B cell (primary cell): ENCODE measurements at regions of chr5 and their contacts with region 1.

Region 1: GRCh38 chr5:59810041-59810440 is 83.5 kb downstream of the PDE4D start:
- DNase-seq: peak; percentile 80
- ATAC-seq: peak; percentile 66
- H3K4me3 ChIP-seq: no peak overlapping the region
- H3K4me3 Mint-ChIP-seq: peak overlapping the region; percentile 51
- H3K27ac ChIP-seq: no peak overlapping the region
- H3K27ac Mint-ChIP-seq: no peak overlapping the region
- H3K4me1 ChIP-seq: peaks cover 0 to 4% of the 10 kb centered on the region in 2 donors
- H3K4me1 Mint-ChIP-seq: peaks cover 16% of the 10 kb centered on the region
- H3K27me3 ChIP-seq: no peaks in the 10 kb centered on the region
- H3K27me3 Mint-ChIP-seq: peaks cover 14% of the 10 kb centered on the region
- CTCF ChIP-seq: peak; percentile 97

Region 2: DNA sequence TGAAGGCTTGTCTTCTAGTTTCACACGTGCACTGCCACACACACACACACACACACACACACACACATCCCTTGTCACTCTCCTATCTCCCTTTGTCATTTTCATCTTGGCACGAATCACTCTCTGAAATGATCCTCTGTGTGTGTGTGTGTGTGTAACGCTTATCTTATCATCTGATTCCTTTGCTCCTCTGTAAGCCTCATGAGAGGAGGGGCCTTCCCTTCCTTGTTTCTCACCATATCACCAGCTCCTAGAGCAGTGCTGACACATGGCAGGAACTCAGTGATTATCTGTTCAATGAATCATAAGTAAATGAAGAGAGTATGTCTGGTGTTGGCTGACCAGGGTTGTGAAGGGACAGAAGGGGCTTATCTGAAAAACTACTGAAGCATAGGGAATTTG is 30.2 kb after region 1 on chr5:
- CTCF ChIA-PET with region 1: no interaction called
- POLR2A ChIA-PET with region 1: no interaction called
- intact Hi-C with region 1: no loop called
- DNase-seq: no peak
- ATAC-seq: no peak
- H3K4me3 ChIP-seq: no peak overlapping the region
- H3K4me3 Mint-ChIP-seq: no peak overlapping the region
- H3K27ac ChIP-seq: no peak overlapping the region
- H3K27ac Mint-ChIP-seq: no peak overlapping the region
- H3K4me1 ChIP-seq: no peaks in the 10 kb centered on the region
- H3K4me1 Mint-ChIP-seq: no peaks in the 10 kb centered on the region
- H3K27me3 ChIP-seq: no peaks in the 10 kb centered on the region
- H3K27me3 Mint-ChIP-seq: peaks cover 10% of the 10 kb centered on the region
- CTCF ChIP-seq: no peak

Region 3: GRCh38 chr5:60287174-60287771 is 477.2 kb after region 1 on chr5:
- CTCF ChIA-PET with region 1: interaction called, 4 read pairs
- POLR2A ChIA-PET with region 1: no interaction called
- intact Hi-C with region 1: loop called (anchors 2 kb)
- DNase-seq: peak; percentile 56
- ATAC-seq: no peak
- H3K4me3 ChIP-seq: no peak overlapping the region
- H3K4me3 Mint-ChIP-seq: no peak overlapping the region
- H3K27ac ChIP-seq: no peak overlapping the region
- H3K27ac Mint-ChIP-seq: no peak overlapping the region
- H3K4me1 ChIP-seq: no peaks in the 10 kb centered on the region
- H3K4me1 Mint-ChIP-seq: no peaks in the 10 kb centered on the region
- H3K27me3 ChIP-seq: no peaks in the 10 kb centered on the region
- H3K27me3 Mint-ChIP-seq: peaks cover 11% of the 10 kb centered on the region
- CTCF ChIP-seq: peak; percentile 67

Region 4: DNA sequence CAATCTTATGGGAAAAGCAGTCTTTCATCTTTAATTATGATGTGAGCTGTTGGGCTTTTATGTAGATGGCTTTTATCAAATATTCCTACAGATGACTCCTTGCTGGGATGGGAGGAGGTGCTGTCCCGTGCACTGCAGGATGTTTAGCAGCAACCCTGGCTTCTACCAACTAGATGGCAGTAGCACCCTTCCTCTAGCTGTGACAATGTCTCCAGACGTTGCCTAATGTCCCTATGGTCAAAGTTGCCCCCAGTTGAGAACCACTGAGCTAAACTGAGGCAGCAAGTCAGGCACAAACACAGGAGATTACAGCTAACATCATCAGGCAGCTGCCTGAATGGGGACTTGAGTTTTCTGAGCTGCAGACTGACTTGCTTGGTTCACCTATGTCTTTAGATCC is 485.4 kb after region 1 on chr5:
- CTCF ChIA-PET with region 1: interaction called, 3 read pairs
- POLR2A ChIA-PET with region 1: no interaction called
- intact Hi-C with region 1: loop called (anchors 2 kb)
- DNase-seq: peak; percentile 51
- ATAC-seq: no peak
- H3K4me3 ChIP-seq: no peak overlapping the region
- H3K4me3 Mint-ChIP-seq: no peak overlapping the region
- H3K27ac ChIP-seq: no peak overlapping the region
- H3K27ac Mint-ChIP-seq: no peak overlapping the region
- H3K4me1 ChIP-seq: no peaks in the 10 kb centered on the region
- H3K4me1 Mint-ChIP-seq: no peaks in the 10 kb centered on the region
- H3K27me3 ChIP-seq: no peaks in the 10 kb centered on the region
- H3K27me3 Mint-ChIP-seq: no peaks in the 10 kb centered on the region
- CTCF ChIP-seq: peak; percentile 41

Region 5: GRCh38 chr5:60586307-60586901 is 776.4 kb after region 1 on chr5:
- CTCF ChIA-PET with region 1: interaction called, 54 read pairs
- POLR2A ChIA-PET with region 1: no interaction called
- intact Hi-C with region 1: loop called (anchors 1 kb)
- DNase-seq: peak; percentile 54
- ATAC-seq: no peak
- H3K4me3 ChIP-seq: no peak overlapping the region
- H3K4me3 Mint-ChIP-seq: no peak overlapping the region
- H3K27ac ChIP-seq: no peak overlapping the region
- H3K27ac Mint-ChIP-seq: no peak overlapping the region
- H3K4me1 ChIP-seq: peaks cover 9 to 10% of the 10 kb centered on the region in 2 donors
- H3K4me1 Mint-ChIP-seq: peaks cover 15% of the 10 kb centered on the region
- H3K27me3 ChIP-seq: no peaks in the 10 kb centered on the region
- H3K27me3 Mint-ChIP-seq: no peaks in the 10 kb centered on the region
- CTCF ChIP-seq: peak; percentile 75

Region 6: DNA sequence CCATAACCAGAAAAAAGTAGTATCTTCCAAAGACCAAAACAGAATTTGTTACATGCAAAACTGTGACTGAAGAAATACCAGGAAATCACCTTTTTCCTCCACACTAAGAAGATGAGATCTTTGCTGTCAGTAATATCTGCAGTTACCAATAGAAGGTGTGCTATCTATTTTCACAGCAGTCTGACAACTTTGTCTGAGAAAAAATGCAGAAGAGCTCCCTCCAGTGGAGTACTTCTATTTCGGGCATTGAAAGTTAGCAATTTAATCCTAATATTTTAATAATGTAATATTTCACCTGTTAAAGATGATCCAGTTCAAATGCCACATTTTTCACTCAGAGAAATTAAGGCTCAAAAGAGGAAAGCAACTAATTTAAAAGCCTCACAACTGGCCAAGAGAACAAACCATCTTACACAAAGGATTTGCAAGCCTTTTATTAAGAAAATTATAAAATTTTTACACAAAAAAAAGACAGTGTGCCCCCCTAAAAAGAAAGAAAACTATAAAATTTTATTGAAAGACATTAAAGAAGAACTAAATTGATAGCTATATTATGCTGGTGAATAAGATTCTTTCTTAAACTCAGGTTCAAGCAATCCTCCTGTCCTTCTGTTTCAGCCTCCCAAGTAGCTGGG is 839.4 kb after region 1 on chr5:
- CTCF ChIA-PET with region 1: interaction called, 12 read pairs
- POLR2A ChIA-PET with region 1: no interaction called
- intact Hi-C with region 1: loop called (anchors 1 kb)
- DNase-seq: peak; percentile 64
- ATAC-seq: no peak
- H3K4me3 ChIP-seq: no peak overlapping the region
- H3K4me3 Mint-ChIP-seq: no peak overlapping the region
- H3K27ac ChIP-seq: no peak overlapping the region
- H3K27ac Mint-ChIP-seq: no peak overlapping the region
- H3K4me1 ChIP-seq: no peaks in the 10 kb centered on the region
- H3K4me1 Mint-ChIP-seq: peaks cover 1% of the 10 kb centered on the region
- H3K27me3 ChIP-seq: no peaks in the 10 kb centered on the region
- H3K27me3 Mint-ChIP-seq: no peaks in the 10 kb centered on the region
- CTCF ChIP-seq: peak; percentile 77

Region 7: DNA sequence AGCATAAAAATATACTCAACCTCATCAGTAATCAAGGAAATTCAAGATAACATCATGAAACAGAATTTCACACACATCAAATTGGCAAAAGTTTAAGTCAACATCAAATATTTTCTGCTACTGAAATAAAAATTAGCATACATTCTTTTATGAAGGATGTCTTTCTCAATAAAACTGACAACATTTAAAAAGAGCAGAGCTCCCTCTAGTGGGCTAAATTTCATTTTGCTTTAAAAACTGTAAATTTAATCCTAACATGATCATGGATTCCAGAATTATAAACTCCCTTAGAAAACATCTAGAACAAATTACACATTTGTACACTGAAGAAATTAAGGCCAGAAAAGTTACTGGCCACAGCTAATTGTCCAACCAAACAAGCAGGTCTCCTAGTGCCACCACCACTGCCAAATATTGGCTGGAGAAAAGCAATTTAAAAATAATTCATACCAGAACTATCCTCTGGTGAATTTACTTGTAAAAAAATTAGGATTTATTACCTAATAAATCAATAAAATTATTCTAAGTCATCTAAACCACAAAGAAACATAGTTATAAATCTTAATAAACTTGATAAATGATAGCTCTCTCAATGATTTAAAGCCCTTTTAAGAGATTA is 858.8 kb after region 1 on chr5:
- CTCF ChIA-PET with region 1: interaction called, 65 read pairs
- POLR2A ChIA-PET with region 1: no interaction called
- intact Hi-C with region 1: loop called (anchors 1 kb)
- DNase-seq: peak; percentile 61
- ATAC-seq: no peak
- H3K4me3 ChIP-seq: no peak overlapping the region
- H3K4me3 Mint-ChIP-seq: no peak overlapping the region
- H3K27ac ChIP-seq: no peak overlapping the region
- H3K27ac Mint-ChIP-seq: no peak overlapping the region
- H3K4me1 ChIP-seq: no peaks in the 10 kb centered on the region
- H3K4me1 Mint-ChIP-seq: no peaks in the 10 kb centered on the region
- H3K27me3 ChIP-seq: no peaks in the 10 kb centered on the region
- H3K27me3 Mint-ChIP-seq: no peaks in the 10 kb centered on the region
- CTCF ChIP-seq: peak; percentile 91